Activated naive CD4-positive, alpha-beta T cell treated with anti-CD3 and anti-CD28 coated beads for 36 hours (primary cell): ENCODE measurements at regions of chr1 and their contacts with region 1.

Region 1: GRCh38 chr1:24910751-24911650 is 19.1 kb downstream of the RUNX3 start:
- DNase-seq: peak; percentile 75
- H3K4me3 Mint-ChIP-seq: no peak overlapping the region
- H3K27ac Mint-ChIP-seq: peak overlapping the region; percentile 85
- H3K4me1 Mint-ChIP-seq: peaks cover 42% of the 10 kb centered on the region
- H3K27me3 Mint-ChIP-seq: no peaks in the 10 kb centered on the region

Region 2: GRCh38 chr1:24830680-24831272 is 80.2 kb before region 1 on chr1:
- CTCF ChIA-PET with region 1: no interaction called
- intact Hi-C with region 1: no loop called
- DNase-seq: no peak
- H3K4me3 Mint-ChIP-seq: no peak overlapping the region
- H3K27ac Mint-ChIP-seq: no peak overlapping the region
- H3K4me1 Mint-ChIP-seq: no peaks in the 10 kb centered on the region
- H3K27me3 Mint-ChIP-seq: no peaks in the 10 kb centered on the region

Region 3: DNA sequence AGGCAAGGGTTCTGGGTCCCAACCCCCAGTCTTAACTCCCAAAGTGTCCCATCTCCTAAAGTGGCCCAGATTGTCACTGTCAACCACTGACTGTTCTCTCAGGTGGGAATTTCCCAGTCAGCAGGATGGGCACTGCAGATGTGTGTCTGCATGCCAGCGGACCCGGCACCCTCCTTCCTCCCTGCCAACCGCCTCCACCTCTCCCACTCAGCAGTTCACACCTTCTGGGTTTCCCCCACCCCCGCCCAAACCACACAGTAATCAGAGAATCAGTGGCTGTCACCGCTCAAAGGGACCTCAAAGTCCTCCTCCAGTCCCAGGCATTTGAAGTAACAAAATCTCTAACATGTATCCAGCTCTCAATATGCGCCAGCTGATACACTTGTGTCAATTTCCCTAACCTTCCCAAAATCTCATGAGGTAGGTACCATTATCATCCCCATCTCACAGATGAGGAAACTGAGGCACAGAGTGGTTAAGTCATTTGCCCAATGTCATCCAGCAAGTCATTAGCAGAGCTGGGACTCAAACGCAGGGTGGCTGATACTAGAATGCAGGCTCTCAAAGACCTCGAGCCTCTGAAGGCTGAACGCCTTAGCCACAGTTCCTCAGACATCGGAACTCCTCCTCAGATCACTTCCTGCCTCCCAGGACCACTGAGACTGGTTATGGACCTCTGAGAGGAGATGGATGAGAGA is 14.2 kb after region 1 on chr1:
- CTCF ChIA-PET with region 1: interaction called, 3 read pairs
- intact Hi-C with region 1: loop called (anchors 1 kb)
- DNase-seq: peak; percentile 93
- H3K4me3 Mint-ChIP-seq: peak overlapping the region; percentile 94
- H3K27ac Mint-ChIP-seq: peak overlapping the region; percentile 77
- H3K4me1 Mint-ChIP-seq: peaks cover 70% of the 10 kb centered on the region
- H3K27me3 Mint-ChIP-seq: no peaks in the 10 kb centered on the region